ENCODE measurements at regions of chr1 and their contacts with region 1.

Region 1: DNA sequence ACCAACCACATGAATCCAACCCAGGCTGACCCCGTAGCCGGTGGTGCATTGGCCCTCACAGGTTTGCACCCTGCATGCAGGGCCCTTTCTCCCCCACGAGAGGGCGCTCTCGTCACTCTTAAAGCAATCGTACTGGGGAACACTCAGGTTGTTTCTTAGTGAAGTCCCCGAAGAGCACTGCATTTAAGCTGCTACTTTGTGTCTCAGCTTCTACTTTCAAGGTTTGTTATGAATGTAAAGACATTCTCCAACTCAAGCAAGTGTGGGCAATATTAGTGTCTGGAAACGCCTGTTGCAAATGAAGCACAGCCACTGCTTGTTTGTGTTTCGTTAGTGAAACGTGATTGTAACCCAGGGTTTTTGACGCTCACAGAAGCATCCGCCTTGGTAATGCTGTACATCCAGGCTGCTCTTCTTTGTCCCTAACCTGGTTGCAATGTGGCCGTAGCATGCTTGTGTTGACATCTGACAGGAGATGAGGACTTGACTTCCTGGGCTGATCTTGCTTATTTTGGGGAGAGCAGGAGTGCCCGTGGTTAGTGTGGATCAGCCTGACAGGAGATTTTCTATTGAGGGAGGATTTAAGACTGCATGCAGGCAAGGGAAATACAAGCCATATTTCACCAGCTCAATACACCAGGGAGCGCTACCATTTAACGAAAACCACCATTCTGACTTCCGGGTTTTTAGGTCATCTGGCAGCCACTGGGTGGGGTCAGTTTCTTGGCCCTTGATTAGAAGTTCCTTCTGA is 79.8 kb downstream of the ST6GALNAC3 start:
- DNase-seq: peak; percentile 67 to 81 (median 78)
- ATAC-seq: peak; percentile 99
- H3K4me3 ChIP-seq: peak overlapping the region; percentile 12; the same call in 1 of the 2 replicates
- H3K27ac ChIP-seq: no peak overlapping the region
- H3K4me1 ChIP-seq: no peaks in the 10 kb centered on the region; a peak in 1 of 5 replicates
- H3K27me3 ChIP-seq: no peaks in the 10 kb centered on the region
- CTCF ChIP-seq: peak; percentile 79 to 94 (median 88)
- EP300 ChIP-seq: no peak
- POLR2A ChIP-seq: no peak
- RAD21 ChIP-seq: peak; percentile 78 to 88

Region 2: DNA sequence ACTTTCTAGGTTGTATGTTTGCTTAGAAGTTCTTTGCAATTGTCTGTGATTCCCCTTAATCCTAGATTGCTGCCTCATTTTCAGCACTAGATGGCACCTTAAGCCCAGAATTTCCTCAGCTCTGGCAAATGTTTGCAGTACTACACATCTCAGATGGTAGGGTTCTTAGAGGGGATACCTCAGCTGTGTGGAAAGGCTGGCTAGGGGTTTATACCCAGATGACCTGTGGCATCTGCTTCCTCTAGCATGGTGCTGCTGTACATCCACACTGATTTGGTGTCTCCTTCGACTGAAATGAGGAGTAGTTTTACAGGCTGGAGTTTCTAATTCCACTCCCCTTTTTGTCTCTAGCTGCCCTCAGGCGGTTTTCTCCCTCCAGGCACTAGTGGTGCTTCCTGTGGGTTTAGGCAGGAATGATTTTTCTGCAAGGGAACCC is 245.6 kb before region 1 on chr1:
- CTCF ChIA-PET with region 1: no interaction called
- POLR2A ChIA-PET with region 1: no interaction called
- in situ Hi-C with region 1: no loop called
- intact Hi-C with region 1: loop called (anchors 5 kb)
- DNase-seq: peak in 1 of 4 experiments; percentile 30
- ATAC-seq: peak; percentile 85
- H3K4me3 ChIP-seq: no peak overlapping the region
- H3K27ac ChIP-seq: no peak overlapping the region
- H3K4me1 ChIP-seq: no peaks in the 10 kb centered on the region
- H3K27me3 ChIP-seq: no peaks in the 10 kb centered on the region
- CTCF ChIP-seq: peak; percentile 42 to 55 (median 45); a peak in 5 of 6 replicates
- EP300 ChIP-seq: no peak
- POLR2A ChIP-seq: no peak
- RAD21 ChIP-seq: peak; percentile 40 to 62

Region 3: GRCh38 chr1:75991497-75992114 is 162.8 kb before region 1 on chr1:
- CTCF ChIA-PET with region 1: no interaction called
- POLR2A ChIA-PET with region 1: no interaction called
- in situ Hi-C with region 1: no loop called
- intact Hi-C with region 1: loop called (anchors 10 kb)
- DNase-seq: peak; percentile 76 to 88 (median 78)
- ATAC-seq: peak; percentile 95
- H3K4me3 ChIP-seq: no peak overlapping the region
- H3K27ac ChIP-seq: no peak overlapping the region
- H3K4me1 ChIP-seq: no peaks in the 10 kb centered on the region
- H3K27me3 ChIP-seq: no peaks in the 10 kb centered on the region
- CTCF ChIP-seq: peak; percentile 70 to 85 (median 82)
- EP300 ChIP-seq: no peak
- POLR2A ChIP-seq: no peak
- RAD21 ChIP-seq: peak; percentile 56 to 71

Region 4: DNA sequence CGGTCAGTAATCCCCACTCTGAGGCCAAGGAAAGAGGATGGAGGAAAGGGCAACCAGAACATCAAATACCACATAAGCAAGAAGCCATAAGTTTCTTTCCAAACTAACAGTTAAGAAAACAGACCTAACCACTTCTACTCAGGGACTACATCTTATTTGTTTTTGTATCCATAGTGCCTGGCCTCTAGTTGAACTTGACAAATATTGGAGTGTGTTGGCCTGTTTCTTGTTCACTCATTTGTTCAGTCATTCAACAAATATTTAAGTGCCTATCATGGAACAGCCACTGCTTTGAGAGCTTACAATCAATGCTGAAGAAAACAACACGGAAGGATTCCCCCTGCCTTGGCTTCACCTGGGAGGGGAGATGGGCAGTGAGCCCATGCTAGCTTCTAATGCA is 10.1 kb before region 1 on chr1:
- CTCF ChIA-PET with region 1: no interaction called
- POLR2A ChIA-PET with region 1: no interaction called
- in situ Hi-C with region 1: no loop called
- intact Hi-C with region 1: no loop called
- DNase-seq: no peak
- ATAC-seq: no peak
- H3K4me3 ChIP-seq: no peak overlapping the region
- H3K27ac ChIP-seq: no peak overlapping the region
- H3K4me1 ChIP-seq: no peaks in the 10 kb centered on the region
- H3K27me3 ChIP-seq: no peaks in the 10 kb centered on the region
- CTCF ChIP-seq: no peak
- EP300 ChIP-seq: no peak
- POLR2A ChIP-seq: no peak
- RAD21 ChIP-seq: no peak

Region 5: DNA sequence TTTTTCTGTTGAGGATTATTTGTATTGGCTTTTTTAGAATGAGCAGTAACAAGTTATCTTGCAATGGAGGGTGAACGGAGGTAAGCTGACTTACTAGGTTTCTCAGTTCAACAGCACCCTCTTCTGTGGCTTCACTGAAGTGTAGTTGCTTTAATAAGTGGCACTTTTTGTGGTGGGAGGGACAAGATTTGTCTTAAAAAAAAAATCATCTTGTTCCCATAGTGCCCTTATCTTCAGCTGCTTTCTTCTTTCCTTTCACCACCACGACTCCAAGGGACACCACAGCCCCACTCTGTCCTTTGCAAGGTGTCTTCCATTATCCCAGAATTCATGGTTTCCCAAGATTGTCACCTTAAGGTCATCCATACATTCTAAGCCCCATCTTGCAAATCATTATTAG is 971.9 kb after region 1 on chr1:
- CTCF ChIA-PET with region 1: interaction called, 7 read pairs
- POLR2A ChIA-PET with region 1: no interaction called
- in situ Hi-C with region 1: no loop called
- intact Hi-C with region 1: loop called (anchors 1 kb)
- DNase-seq: peak in 2 of 4 experiments; percentile 35 to 56
- ATAC-seq: peak; percentile 85
- H3K4me3 ChIP-seq: no peak overlapping the region
- H3K27ac ChIP-seq: no peak overlapping the region
- H3K4me1 ChIP-seq: no peaks in the 10 kb centered on the region
- H3K27me3 ChIP-seq: no peaks in the 10 kb centered on the region
- CTCF ChIP-seq: peak; percentile 22 to 67 (median 54); a peak in 5 of 6 replicates
- EP300 ChIP-seq: no peak
- POLR2A ChIP-seq: no peak
- RAD21 ChIP-seq: peak; percentile 59 to 64

Region 6: GRCh38 chr1:77143529-77144121 is 989.2 kb after region 1 on chr1:
- CTCF ChIA-PET with region 1: no interaction called
- POLR2A ChIA-PET with region 1: no interaction called
- in situ Hi-C with region 1: loop called (anchors 10 kb)
- intact Hi-C with region 1: loop called (anchors 1 kb)
- DNase-seq: peak in 1 of 4 experiments; percentile 9
- ATAC-seq: no peak
- H3K4me3 ChIP-seq: no peak overlapping the region
- H3K27ac ChIP-seq: no peak overlapping the region
- H3K4me1 ChIP-seq: no peaks in the 10 kb centered on the region
- H3K27me3 ChIP-seq: no peaks in the 10 kb centered on the region
- CTCF ChIP-seq: peak in 1 of 3 experiments; percentile 49; a peak in 2 of 6 replicates
- EP300 ChIP-seq: no peak
- POLR2A ChIP-seq: no peak
- RAD21 ChIP-seq: peak; percentile 14; a peak in 1 of 4 replicates

Region 7: GRCh38 chr1:77533660-77534305 is 1379.4 kb after region 1 on chr1:
- CTCF ChIA-PET with region 1: no interaction called
- POLR2A ChIA-PET with region 1: no interaction called
- in situ Hi-C with region 1: no loop called
- intact Hi-C with region 1: loop called (anchors 5 kb)
- DNase-seq: peak; percentile 68 to 77 (median 73)
- ATAC-seq: peak; percentile 86
- H3K4me3 ChIP-seq: no peak overlapping the region
- H3K27ac ChIP-seq: no peak overlapping the region
- H3K4me1 ChIP-seq: no peaks in the 10 kb centered on the region; a peak in 1 of 5 replicates
- H3K27me3 ChIP-seq: peaks cover 0 to 11% of the 10 kb centered on the region in 2 experiments; a peak in 2 of 5 replicates
- CTCF ChIP-seq: peak; percentile 73 to 80 (median 76)
- EP300 ChIP-seq: no peak
- POLR2A ChIP-seq: no peak
- RAD21 ChIP-seq: peak; percentile 36 to 46; a peak in 3 of 4 replicates

Measured in K562 (cell line).